OCI-LY7 (cell line): ENCODE measurements at regions of chrX and their contacts with region 1.

Region 1: DNA sequence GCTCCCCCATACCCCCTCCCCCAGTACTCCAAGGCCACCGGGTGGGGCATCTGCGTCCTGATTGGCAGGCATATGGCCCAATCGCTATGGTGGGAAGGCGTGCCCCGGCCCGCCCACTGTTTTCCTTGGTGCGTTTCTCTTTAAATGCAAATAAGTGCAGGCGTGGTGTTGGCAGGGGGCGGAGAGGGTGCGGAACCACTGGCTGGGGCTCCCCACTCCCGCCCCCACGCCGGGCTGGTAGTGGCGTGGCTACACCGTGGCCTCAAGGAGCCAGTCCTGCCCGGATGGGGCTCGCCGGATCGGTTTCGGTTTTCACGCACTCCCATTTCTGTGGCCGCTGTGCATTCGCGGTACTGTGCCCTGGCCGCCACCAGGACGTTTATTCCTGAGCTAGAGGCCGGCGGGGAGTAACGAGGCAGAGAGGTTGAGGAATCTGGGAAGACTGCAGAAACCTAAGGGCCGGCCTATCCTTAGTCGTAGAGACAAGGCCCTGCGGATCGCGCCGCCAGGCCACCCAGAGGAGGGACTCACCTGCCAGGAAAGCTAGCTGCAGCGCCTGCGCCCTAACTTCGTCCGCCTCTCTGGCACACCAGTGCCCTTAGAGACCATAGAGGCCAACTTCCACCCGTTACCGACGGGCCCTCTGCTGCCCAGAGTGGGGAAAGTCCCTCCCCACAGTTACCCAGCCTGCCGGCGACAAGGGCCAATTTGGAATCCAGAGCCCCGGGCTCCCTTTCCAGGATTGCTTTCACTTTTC is 405 bp upstream of the AMER1 start:
- DNase-seq: peak; percentile 91
- H3K4me3 ChIP-seq: peak overlapping the region; percentile 80
- H3K27ac ChIP-seq: peak overlapping the region; percentile 47
- H3K4me1 ChIP-seq: peaks cover 12% of the 10 kb centered on the region
- CTCF ChIP-seq: peak; percentile 46; the same call in 1 of the 2 replicates

Region 2: DNA sequence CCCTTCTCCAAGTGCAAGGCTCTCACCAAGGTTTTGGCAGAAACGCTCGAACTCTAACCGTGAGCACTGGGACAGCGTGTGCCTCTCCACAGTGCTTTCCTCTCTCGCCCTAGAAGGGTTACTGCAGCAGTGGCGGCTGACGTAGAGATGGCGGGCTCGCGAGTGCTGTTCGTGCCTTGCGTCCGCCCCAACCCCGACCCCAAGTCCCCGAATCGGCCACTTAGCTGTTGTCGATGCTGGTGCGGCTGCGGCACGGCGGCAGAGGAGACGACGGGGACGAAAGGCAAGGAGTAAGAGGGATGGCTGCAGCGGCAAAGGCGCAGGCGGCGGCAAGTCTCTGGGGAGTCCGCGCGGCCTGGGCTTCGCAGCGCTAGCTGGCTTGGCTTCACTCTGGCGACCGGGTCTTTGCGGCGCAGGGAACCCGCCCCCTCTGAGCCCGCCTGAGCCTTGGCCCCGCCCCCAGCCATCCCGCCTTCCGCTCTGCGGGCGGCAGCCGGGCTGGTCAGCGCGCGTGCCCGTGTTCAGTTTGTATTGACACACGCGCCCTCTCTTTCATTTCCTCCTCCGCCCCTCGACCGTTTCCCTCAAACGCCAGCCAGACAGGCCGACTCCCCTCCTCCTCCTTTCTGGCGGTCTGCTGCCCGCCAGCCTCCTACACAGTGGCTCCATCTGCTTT is 854.8 kb before region 1 on chrX and contains the start of gene SPIN4:
- CTCF ChIA-PET with region 1: no interaction called
- POLR2A ChIA-PET with region 1: no interaction called
- intact Hi-C with region 1: loop called (anchors 5 kb)
- DNase-seq: peak; percentile 87
- H3K4me3 ChIP-seq: peak within 1 kb of the TSS; percentile 90
- H3K27ac ChIP-seq: peak within 1 kb of the TSS; percentile 86
- H3K4me1 ChIP-seq: peaks cover 4% of the 10 kb centered on the region
- CTCF ChIP-seq: no peak
- total RNA-seq, gene SPIN4: 9.6 and 10.5 TPM in 2 replicates

Region 3: GRCh38 chrX:64218023-64218422 is 12.1 kb after region 1 on chrX:
- CTCF ChIA-PET with region 1: no interaction called
- POLR2A ChIA-PET with region 1: no interaction called
- intact Hi-C with region 1: no loop called
- DNase-seq: no peak
- H3K4me3 ChIP-seq: no peak overlapping the region
- H3K27ac ChIP-seq: no peak overlapping the region
- H3K4me1 ChIP-seq: no peaks in the 10 kb centered on the region
- CTCF ChIP-seq: no peak

Region 4: GRCh38 chrX:64394874-64395567 is 189.1 kb after region 1 on chrX and contains the start of gene MTMR8:
- CTCF ChIA-PET with region 1: no interaction called
- POLR2A ChIA-PET with region 1: no interaction called
- intact Hi-C with region 1: loop called (anchors 2 kb)
- DNase-seq: peak; percentile 85
- H3K4me3 ChIP-seq: peak within 1 kb of the TSS; percentile 77
- H3K27ac ChIP-seq: peak within 1 kb of the TSS; percentile 46
- H3K4me1 ChIP-seq: no peaks in the 10 kb centered on the region
- CTCF ChIP-seq: no peak
- total RNA-seq, gene MTMR8: 4.1 and 8.5 TPM in 2 replicates

Region 5: GRCh38 chrX:64447207-64447606 is 241.3 kb after region 1 on chrX:
- CTCF ChIA-PET with region 1: no interaction called
- POLR2A ChIA-PET with region 1: no interaction called
- intact Hi-C with region 1: no loop called
- DNase-seq: no peak
- H3K4me3 ChIP-seq: no peak overlapping the region
- H3K27ac ChIP-seq: no peak overlapping the region
- H3K4me1 ChIP-seq: no peaks in the 10 kb centered on the region
- CTCF ChIP-seq: no peak